GM18951 (cell line): ENCODE measurements at regions of chrX and their contacts with region 1.

Region 1: DNA sequence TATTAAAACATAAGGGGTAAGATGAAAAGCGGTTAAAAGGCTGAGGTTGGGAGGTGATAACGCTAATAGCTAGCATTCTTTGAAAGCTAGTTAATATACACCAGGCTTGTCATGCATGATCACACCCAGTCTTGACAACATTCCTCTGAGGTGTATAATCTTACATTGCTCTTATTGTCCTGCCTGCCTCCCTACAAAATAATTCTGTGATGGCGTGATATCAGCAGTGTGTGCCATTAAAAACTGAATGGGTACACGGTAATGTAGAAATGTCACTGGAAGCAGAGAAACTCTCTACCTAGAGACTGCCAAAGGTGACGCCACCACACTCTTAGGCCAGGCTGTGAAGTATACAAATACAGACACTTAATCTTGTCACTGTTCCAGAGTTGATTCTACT is 68.1 kb downstream of the DIAPH2 start:
- POLR2A ChIP-seq: no peak

Region 2: GRCh38 chrX:96224279-96224678 is 528.5 kb before region 1 on chrX:
- in situ Hi-C with region 1: loop called (anchors 10 kb)
- POLR2A ChIP-seq: no peak

Region 3: DNA sequence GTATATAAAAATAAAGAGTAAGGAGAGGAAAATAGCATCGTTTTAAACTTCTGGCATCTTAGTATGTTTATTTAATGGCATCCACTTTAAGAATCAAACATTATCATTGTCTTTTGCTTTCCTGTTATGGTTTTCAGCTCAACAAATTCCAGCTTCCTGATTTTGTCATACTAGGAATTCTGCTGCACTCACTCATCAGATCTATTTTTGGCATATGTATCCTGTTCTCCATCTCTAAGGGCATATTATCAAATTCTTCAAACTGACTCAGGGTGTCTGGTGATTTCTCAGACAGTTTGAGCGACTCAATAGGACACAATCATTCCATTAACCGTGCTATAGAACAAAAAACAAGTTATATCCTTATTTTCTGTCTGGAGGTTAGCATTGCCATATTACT is 316.7 kb before region 1 on chrX:
- in situ Hi-C with region 1: no loop called
- POLR2A ChIP-seq: no peak